CD14-positive monocyte (primary cell): ENCODE measurements at regions of chr22 and their contacts with region 1.

Region 1: DNA sequence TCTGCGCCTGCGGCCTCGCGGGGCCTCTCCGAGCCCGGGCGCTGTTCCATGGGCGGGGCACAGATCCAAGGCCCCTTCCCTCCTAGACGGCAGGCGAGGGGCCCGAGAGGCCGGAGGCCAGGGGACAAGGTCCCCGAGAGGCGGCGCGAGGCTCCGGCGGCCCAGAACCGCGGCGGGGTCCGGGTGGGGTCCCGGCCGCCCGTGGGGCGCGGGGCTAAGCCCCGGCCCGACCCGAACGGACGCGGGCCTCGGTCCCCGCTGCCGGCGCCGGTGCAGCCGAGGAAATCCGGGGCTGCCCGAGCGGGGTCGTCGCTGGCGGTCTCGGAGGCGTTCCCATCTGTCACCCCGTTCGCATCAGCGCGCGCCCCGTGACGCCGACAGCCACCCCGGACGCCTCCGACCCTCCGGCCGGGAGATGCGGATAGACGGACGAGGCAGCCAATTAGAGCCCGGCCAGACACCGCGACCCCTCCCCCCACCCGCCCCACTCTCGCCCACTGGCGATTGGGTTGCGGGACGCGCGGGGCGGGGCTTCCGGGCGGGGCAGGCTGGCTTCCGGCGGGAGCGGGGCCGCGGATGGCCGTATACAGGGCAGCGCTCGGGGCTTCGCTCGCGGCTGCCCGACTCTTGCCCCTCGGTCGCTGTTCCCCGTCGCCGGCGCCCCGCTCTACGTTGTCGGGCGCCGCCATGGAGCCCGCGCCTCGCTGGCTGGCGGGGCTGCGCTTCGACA is at the start of gene SELENOO:
- DNase-seq: peak; percentile 80 to 88 (median 88)
- H3K4me3 ChIP-seq: peak within 1 kb of the TSS; percentile 59 to 82 (median 72)
- H3K4me3 Mint-ChIP-seq: peak within 1 kb of the TSS; percentile 89 to 91
- H3K27ac ChIP-seq: peak within 1 kb of the TSS in 1 of 2 donors; percentile 82
- H3K27ac Mint-ChIP-seq: peak within 1 kb of the TSS in 6 of 7 donors; percentile 71 to 89 (median 86)
- H3K4me1 ChIP-seq: peaks cover 45 to 57% of the 10 kb centered on the region in 2 donors
- H3K4me1 Mint-ChIP-seq: peaks cover 41% of the 10 kb centered on the region
- H3K27me3 ChIP-seq: no peaks in the 10 kb centered on the region
- H3K27me3 Mint-ChIP-seq: peaks cover 0 to 2% (median 2%) of the 10 kb centered on the region in 3 donors
- CTCF ChIP-seq: no peak
- polyA plus RNA-seq, gene SELENOO: 2.7 to 76.9 (median 8.7) TPM

Region 2: GRCh38 chr22:49930739-49931412 is 269.8 kb before region 1 on chr22:
- intact Hi-C with region 1: loop called in 1 of 2 experiments (anchors 10 kb)
- DNase-seq: peak; percentile 91 to 96 (median 95)
- H3K4me3 ChIP-seq: peak overlapping the region in 1 of 3 experiments; percentile 18
- H3K4me3 Mint-ChIP-seq: peak overlapping the region; percentile 35 to 49
- H3K27ac ChIP-seq: peak overlapping the region; percentile 45 to 62
- H3K27ac Mint-ChIP-seq: peak overlapping the region; percentile 79 to 91 (median 89)
- H3K4me1 ChIP-seq: peaks cover 47 to 58% of the 10 kb centered on the region in 2 donors
- H3K4me1 Mint-ChIP-seq: peaks cover 36% of the 10 kb centered on the region
- H3K27me3 ChIP-seq: peaks cover 0 to 3% of the 10 kb centered on the region in 2 donors
- H3K27me3 Mint-ChIP-seq: peaks cover 1 to 10% (median 2%) of the 10 kb centered on the region in 3 donors
- CTCF ChIP-seq: peak; percentile 89

Region 3: DNA sequence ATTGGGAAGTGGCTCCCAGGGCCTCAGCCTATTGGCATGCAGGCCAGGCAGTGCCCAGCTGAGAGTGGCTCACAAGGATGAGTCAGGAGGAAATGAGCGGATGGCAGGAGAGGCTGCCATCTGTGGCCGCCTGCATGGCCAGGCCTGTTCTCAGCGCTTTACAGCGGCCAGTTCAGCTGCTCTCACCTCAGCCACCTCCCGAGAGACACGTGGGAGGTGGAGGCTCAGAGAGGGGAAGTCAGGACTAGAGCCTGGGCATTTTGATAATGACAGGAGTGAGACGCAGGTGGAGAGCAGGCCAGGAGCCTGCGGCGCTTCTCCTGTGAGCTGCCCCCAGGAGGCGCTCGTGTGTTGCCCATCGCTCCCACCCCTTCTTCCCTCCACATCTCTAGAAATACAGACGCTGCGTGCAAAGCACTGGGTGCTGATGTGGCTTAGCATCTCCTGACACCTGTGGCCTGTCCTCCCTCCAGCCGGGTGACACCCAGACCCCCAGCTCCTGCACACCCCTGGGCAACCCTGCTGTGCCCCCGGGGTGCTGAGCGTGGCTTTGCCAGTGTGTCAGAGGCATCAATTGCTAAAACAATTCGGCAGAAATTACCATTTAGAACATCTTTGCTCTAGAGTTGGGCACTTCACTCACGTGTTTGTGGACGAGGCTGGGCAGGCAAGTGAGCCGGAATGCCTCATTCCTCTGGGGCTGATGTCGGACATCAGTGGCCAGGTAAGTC is 51.5 kb before region 1 on chr22:
- intact Hi-C with region 1: loop called in 1 of 2 experiments (anchors 2 kb)
- DNase-seq: peak; percentile 76 to 83 (median 79)
- H3K4me3 ChIP-seq: peak overlapping the region in 1 of 3 experiments; percentile 52
- H3K4me3 Mint-ChIP-seq: peak overlapping the region; percentile 57 to 79
- H3K27ac ChIP-seq: no peak overlapping the region
- H3K27ac Mint-ChIP-seq: peak overlapping the region in 4 of 7 donors; percentile 10 to 70 (median 54)
- H3K4me1 ChIP-seq: peaks cover 35 to 38% of the 10 kb centered on the region in 2 donors
- H3K4me1 Mint-ChIP-seq: peaks cover 46% of the 10 kb centered on the region
- H3K27me3 ChIP-seq: no peaks in the 10 kb centered on the region
- H3K27me3 Mint-ChIP-seq: peaks cover 0 to 6% (median 0%) of the 10 kb centered on the region in 3 donors
- CTCF ChIP-seq: peak; percentile 98

Region 4: GRCh38 chr22:50185384-50186087 is 15.1 kb before region 1 on chr22 and contains the start of gene TRABD:
- intact Hi-C with region 1: loop called (anchors 2 kb)
- DNase-seq: peak; percentile 82 to 87 (median 87)
- H3K4me3 ChIP-seq: peak within 1 kb of the TSS; percentile 56 to 86 (median 58)
- H3K4me3 Mint-ChIP-seq: peak within 1 kb of the TSS; percentile 95
- H3K27ac ChIP-seq: peak within 1 kb of the TSS; percentile 31 to 85
- H3K27ac Mint-ChIP-seq: peak within 1 kb of the TSS; percentile 82 to 96 (median 89)
- H3K4me1 ChIP-seq: peaks cover 56 to 66% of the 10 kb centered on the region in 2 donors
- H3K4me1 Mint-ChIP-seq: peaks cover 46% of the 10 kb centered on the region
- H3K27me3 ChIP-seq: no peaks in the 10 kb centered on the region
- H3K27me3 Mint-ChIP-seq: peaks cover 1 to 5% (median 2%) of the 10 kb centered on the region in 3 donors
- CTCF ChIP-seq: no peak
- polyA plus RNA-seq, gene TRABD: 34.5 to 240 (median 39.3) TPM